ENCODE measurements at regions of chr4 and their contacts with region 1.

Region 1: GRCh38 chr4:177309522-177310371 is at the start of gene NEIL3:
- DNase-seq: peak; percentile 88
- H3K4me3 Mint-ChIP-seq: peak within 1 kb of the TSS; percentile 96
- H3K27ac Mint-ChIP-seq: peak within 1 kb of the TSS; percentile 89
- H3K4me1 Mint-ChIP-seq: peaks cover 59% of the 10 kb centered on the region
- H3K27me3 Mint-ChIP-seq: no peaks in the 10 kb centered on the region
- total RNA-seq, gene NEIL3: 12.9 and 13.6 TPM in 2 replicates

Region 2: DNA sequence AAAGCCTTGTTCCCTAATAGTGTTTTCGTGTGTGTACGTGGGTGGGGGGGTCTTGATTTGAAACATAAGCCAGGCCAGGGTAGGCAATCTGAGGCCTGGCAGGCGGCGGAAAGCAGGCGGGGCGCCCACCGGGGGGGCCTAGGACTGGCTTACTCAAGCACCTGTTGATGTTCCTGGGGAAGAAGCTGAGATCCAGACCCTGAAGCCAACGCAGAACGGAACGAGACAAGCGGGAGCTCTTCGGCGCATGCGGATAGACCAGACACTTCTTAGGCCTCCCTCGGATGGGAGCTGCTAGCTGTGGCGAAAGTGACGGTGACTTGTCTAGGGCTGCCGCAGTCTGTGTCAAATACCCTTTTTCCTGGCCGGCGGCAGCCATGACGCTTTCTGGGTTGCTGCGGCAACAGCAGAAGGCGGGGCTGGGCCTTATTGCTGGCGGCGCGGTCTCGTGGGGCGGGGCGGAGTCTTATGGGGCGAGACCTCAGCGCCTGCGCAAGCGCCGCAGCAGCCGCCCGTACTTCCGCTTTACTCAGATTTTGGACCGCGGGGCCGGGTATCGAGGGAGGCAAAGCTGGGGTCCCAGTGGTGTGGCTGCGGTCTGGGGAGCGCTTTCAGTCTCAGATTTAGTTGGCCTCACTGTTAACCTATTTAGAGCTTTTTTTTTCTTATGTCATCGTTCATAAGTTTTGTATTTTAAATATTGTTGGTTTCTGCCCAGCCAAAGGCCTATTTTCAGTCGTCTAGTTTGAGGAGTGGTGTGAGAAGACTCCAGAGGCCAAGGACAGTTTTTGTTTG is 1114.4 kb before region 1 on chr4 and contains the start of gene SPATA4:
- intact Hi-C with region 1: loop called (anchors 5 kb)
- DNase-seq: peak; percentile 88
- H3K4me3 Mint-ChIP-seq: peak within 1 kb of the TSS; percentile 70
- H3K27ac Mint-ChIP-seq: peak within 1 kb of the TSS; percentile 72
- H3K4me1 Mint-ChIP-seq: peaks cover 22% of the 10 kb centered on the region
- H3K27me3 Mint-ChIP-seq: peaks cover 33% of the 10 kb centered on the region
- total RNA-seq, gene SPATA4: not detected in 2 replicates

Region 3: DNA sequence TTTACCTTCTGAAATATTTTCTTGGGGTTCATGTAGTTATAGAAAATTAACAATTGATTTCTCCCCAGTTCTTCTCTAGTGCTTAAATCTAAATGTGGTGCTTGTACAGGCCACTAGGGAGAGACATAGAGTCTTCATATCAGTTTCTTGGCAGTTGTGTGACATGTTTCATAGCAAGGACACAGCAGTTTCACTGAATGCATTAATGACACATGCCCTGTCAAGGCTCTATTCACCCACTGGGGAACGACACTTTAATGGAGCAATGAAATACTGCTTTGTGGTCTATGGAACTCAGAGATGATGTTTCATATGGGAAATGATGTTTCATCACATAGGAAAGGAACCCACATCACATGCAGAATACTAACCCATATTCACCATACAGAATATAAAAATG is 519.8 kb before region 1 on chr4:
- intact Hi-C with region 1: loop called (anchors 10 kb)
- DNase-seq: no peak
- H3K4me3 Mint-ChIP-seq: no peak overlapping the region
- H3K27ac Mint-ChIP-seq: no peak overlapping the region
- H3K4me1 Mint-ChIP-seq: no peaks in the 10 kb centered on the region
- H3K27me3 Mint-ChIP-seq: peaks cover 41% of the 10 kb centered on the region

Region 4: DNA sequence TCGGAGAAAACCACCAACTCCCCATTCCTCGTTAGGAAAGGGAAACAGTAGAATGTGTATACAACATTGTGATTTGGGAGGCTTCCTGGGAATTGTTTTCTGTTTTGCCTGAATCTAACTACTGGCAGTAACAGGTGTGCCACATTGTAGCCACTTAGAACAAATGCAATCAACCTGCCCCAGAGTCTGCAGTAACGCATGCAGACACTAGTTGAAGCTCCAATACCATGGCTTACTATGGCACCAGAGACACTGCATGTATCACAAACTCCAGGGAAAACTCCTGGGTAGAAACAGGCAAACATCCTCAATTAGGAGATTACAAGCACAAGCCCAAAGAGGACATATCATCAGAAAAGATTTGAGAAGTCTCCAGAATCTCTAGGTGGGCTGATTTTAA is 154.3 kb before region 1 on chr4:
- intact Hi-C with region 1: no loop called
- DNase-seq: no peak
- H3K4me3 Mint-ChIP-seq: no peak overlapping the region
- H3K27ac Mint-ChIP-seq: no peak overlapping the region
- H3K4me1 Mint-ChIP-seq: no peaks in the 10 kb centered on the region
- H3K27me3 Mint-ChIP-seq: no peaks in the 10 kb centered on the region

Region 5: GRCh38 chr4:177250056-177250696 is 59.6 kb before region 1 on chr4:
- intact Hi-C with region 1: loop called (anchors 1 kb)
- DNase-seq: peak; percentile 66
- H3K4me3 Mint-ChIP-seq: no peak overlapping the region
- H3K27ac Mint-ChIP-seq: no peak overlapping the region
- H3K4me1 Mint-ChIP-seq: peaks cover 15% of the 10 kb centered on the region
- H3K27me3 Mint-ChIP-seq: peaks cover 15% of the 10 kb centered on the region

Region 6: GRCh38 chr4:177320721-177321120 is 11.0 kb after region 1 on chr4:
- intact Hi-C with region 1: loop called (anchors 1 kb)
- DNase-seq: no peak
- H3K4me3 Mint-ChIP-seq: peak overlapping the region; percentile 3
- H3K27ac Mint-ChIP-seq: peak overlapping the region; percentile 11
- H3K4me1 Mint-ChIP-seq: peaks cover 87% of the 10 kb centered on the region
- H3K27me3 Mint-ChIP-seq: no peaks in the 10 kb centered on the region

Region 7: DNA sequence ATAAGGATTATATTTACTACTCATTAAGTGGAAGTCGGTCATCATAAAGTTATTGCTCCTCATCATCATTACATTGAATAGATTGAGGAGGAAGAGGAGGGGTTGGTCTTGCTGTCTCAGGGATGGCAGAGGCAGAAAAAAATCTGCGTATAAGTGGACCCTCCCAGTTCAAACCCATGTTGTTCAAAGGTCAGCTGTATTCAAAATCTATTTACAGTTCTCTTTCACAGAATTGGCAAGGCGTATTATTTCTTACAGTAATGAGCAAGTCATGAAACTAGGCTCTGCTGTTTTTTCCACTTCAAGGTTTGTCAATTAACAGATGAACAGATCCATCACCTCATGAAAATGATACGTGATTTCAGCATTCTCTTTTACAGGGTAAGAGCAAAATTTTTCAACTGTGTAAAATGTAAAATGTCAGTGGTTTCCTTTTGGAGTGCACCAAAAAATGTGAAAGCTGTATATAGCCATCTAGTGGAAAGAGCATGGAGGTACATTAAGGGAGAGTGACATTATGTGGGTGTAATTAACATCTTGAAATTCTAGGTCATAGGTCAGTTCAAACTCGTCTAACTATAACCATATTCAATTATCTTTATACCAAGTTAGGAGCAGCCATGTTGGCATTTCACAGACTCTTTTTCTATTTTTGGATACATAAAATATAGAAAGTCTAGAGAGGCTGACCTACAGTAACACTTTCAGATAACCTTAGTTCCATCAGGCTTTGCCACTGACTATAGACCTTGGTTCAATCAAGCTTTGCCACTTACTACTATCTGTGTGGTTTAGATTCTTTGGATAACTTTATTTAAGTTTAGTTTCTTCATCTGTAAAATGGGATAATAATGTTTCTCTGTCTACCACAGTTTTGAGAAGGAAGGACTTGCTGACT is 30.0 kb after region 1 on chr4:
- intact Hi-C with region 1: loop called (anchors 1 kb)
- DNase-seq: no peak
- H3K4me3 Mint-ChIP-seq: no peak overlapping the region
- H3K27ac Mint-ChIP-seq: peak overlapping the region; percentile 49
- H3K4me1 Mint-ChIP-seq: peaks cover 27% of the 10 kb centered on the region
- H3K27me3 Mint-ChIP-seq: no peaks in the 10 kb centered on the region

Region 8: GRCh38 chr4:177351622-177352244 is 42.0 kb after region 1 on chr4:
- intact Hi-C with region 1: no loop called
- DNase-seq: no peak
- H3K4me3 Mint-ChIP-seq: no peak overlapping the region
- H3K27ac Mint-ChIP-seq: no peak overlapping the region
- H3K4me1 Mint-ChIP-seq: peaks cover 6% of the 10 kb centered on the region
- H3K27me3 Mint-ChIP-seq: peaks cover 2% of the 10 kb centered on the region

Region 9: GRCh38 chr4:177441803-177442622 is 132.3 kb after region 1 on chr4 and contains the start of gene AGA:
- intact Hi-C with region 1: loop called (anchors 1 kb)
- DNase-seq: peak; percentile 94
- H3K4me3 Mint-ChIP-seq: peak within 1 kb of the TSS; percentile 90
- H3K27ac Mint-ChIP-seq: peak within 1 kb of the TSS; percentile 95
- H3K4me1 Mint-ChIP-seq: peaks cover 31% of the 10 kb centered on the region
- H3K27me3 Mint-ChIP-seq: no peaks in the 10 kb centered on the region
- total RNA-seq, gene AGA: 16.0 and 16.3 TPM in 2 replicates

Measured in activated T-helper 1 cell treated with anti-CD3 and anti-CD28 coated beads, Interleukin-12 subunit alpha, Interleukin-12 subunit beta, Interleukin-2, Interleukin-4 antibody, amounts not matched to agents 30 ng/mL and 10 ng/mL and 1 ng/mL, durations not matched to agents 14 hours and 24 hours and 36 hours (primary cell).